ENCODE measurements at regions of chr1 and their contacts with region 1.

Region 1: DNA sequence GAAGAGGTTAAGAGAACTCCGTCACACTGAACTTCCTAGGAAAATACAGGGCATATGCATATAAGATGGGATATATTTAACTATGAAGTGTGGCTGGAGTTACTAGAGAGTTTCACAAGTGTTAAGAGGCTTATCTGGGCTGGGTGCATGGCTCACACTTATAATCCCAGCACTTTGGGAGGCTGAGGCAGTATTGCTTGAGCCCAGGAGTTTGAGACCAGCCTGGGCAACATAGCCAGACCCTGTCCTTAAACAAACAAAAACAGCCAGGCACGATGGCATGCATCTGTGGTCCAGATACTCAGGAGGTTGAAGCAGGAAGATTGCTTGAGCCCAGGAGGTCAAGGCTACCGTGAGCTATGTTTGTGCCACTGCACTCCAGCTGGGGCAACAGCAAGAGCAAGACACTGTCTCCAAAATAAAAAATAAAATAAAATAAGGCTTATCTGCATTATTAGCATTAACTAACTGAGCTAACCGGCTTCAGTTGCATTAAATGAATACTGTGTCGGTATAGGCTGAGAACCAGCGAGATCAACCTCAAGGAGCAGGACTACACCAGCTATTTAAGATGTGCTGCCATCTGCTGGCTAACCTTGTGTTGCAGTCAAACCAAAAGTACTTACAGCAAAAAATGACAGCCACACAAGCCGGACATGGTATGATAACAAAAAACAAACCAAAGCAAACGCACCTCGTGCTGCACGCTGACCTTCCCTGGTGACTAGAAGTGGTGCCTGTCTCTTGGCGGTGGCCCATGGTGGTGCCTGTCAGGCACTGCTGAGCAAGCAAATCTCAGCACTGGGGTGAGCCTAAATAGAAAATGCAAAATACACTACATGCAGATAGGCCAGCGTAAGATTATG is 19.7 kb upstream of the RBBP5 start:
- DNase-seq: peak; percentile 57 to 87
- H3K4me3 ChIP-seq: no peak overlapping the region
- H3K27ac ChIP-seq: no peak overlapping the region
- H3K4me1 ChIP-seq: peaks cover 0 to 3% (median 1%) of the 10 kb centered on the region in 4 experiments; a peak in 2 of 7 replicates
- H3K27me3 ChIP-seq: no peaks in the 10 kb centered on the region
- CTCF ChIP-seq: peak; percentile 17 to 83 (median 79)
- EP300 ChIP-seq: no peak
- POLR2A ChIP-seq: no peak
- RAD21 ChIP-seq: peak; percentile 61 to 71

Region 2: GRCh38 chr1:205111354-205111753 is 30.1 kb before region 1 on chr1:
- CTCF ChIA-PET with region 1: interaction called, 11 read pairs
- POLR2A ChIA-PET with region 1: interaction called, 3 read pairs
- DNase-seq: no peak
- H3K4me3 ChIP-seq: no peak overlapping the region
- H3K27ac ChIP-seq: no peak overlapping the region
- H3K4me1 ChIP-seq: no peaks in the 10 kb centered on the region; a peak in 1 of 7 replicates
- H3K27me3 ChIP-seq: no peaks in the 10 kb centered on the region
- CTCF ChIP-seq: no peak
- EP300 ChIP-seq: no peak
- POLR2A ChIP-seq: no peak
- RAD21 ChIP-seq: no peak

Region 3: DNA sequence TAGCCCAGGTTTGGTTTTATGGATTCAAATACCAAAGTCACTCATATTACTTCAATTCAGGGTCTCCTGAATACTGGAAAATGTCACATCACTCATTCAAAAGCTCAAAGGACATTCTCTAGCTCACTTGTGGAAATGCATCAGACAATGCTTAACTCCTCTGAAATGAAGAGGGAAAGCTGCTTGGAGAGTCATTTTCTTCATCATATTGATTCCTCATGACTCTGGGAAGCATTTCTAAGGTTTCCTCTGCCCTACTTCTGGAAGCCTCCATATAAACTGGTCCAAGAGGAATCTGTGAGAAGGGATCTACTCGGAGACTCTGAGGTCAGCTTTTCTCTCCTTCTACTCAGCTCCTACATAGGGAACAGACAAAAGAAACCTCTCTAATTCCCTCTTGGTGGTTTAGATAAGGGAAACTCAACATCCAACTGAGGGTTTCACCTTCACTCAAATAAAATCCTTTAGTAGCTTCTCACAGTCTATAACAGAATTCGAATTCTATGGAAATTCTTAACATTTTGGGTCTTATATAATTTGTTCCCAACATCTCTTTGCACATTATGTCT is 16.7 kb after region 1 on chr1:
- CTCF ChIA-PET with region 1: interaction called, 18 read pairs
- POLR2A ChIA-PET with region 1: interaction called, 3 read pairs
- DNase-seq: no peak
- H3K4me3 ChIP-seq: no peak overlapping the region
- H3K27ac ChIP-seq: no peak overlapping the region
- H3K4me1 ChIP-seq: no peaks in the 10 kb centered on the region
- H3K27me3 ChIP-seq: no peaks in the 10 kb centered on the region
- CTCF ChIP-seq: no peak
- EP300 ChIP-seq: no peak
- POLR2A ChIP-seq: no peak
- RAD21 ChIP-seq: no peak

Measured in H1 (cell line).